A549 (cell line): ENCODE measurements at regions of chr15 and their contacts with region 1.

Region 1: GRCh38 chr15:81400640-81401236 is 26.7 kb upstream of the TMC3 start:
- DNase-seq: peak; percentile 55 to 61
- ATAC-seq: peak; percentile 67 to 78; a peak in 4 of 6 replicates
- H3K4me3 ChIP-seq: no peak overlapping the region
- H3K27ac ChIP-seq: no peak overlapping the region
- H3K4me1 ChIP-seq: no peaks in the 10 kb centered on the region
- CTCF ChIP-seq: peak; percentile 82
- EP300 ChIP-seq: no peak
- POLR2A ChIP-seq: no peak
- RAD21 ChIP-seq: peak; percentile 86 to 87

Region 2: DNA sequence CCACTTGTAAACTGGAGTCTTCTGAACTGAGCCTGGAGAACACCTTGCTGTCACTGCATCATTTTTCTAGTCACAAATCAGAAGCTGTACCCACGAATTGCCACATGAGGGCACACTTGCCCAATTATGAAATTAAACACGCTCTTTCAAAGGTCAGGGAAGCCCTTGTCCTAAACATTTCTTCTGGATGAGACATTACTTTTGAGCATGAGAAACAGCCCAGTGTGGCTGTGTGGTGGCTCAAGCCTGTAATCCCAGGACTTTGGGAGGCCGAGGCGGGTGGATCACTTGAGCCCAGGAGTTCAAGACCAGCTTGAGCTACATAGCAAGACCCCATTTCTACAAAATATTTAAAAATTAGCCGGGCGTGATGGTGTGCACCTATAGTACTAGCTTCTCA is 294.2 kb before region 1 on chr15:
- CTCF ChIA-PET with region 1: interaction called, 14 read pairs
- POLR2A ChIA-PET with region 1: no interaction called
- DNase-seq: peak; percentile 61 to 64
- ATAC-seq: peak; percentile 62 to 83
- H3K4me3 ChIP-seq: no peak overlapping the region
- H3K27ac ChIP-seq: no peak overlapping the region
- H3K4me1 ChIP-seq: no peaks in the 10 kb centered on the region
- CTCF ChIP-seq: peak; percentile 73
- EP300 ChIP-seq: no peak
- POLR2A ChIP-seq: no peak
- RAD21 ChIP-seq: peak; percentile 75 to 81

Region 3: DNA sequence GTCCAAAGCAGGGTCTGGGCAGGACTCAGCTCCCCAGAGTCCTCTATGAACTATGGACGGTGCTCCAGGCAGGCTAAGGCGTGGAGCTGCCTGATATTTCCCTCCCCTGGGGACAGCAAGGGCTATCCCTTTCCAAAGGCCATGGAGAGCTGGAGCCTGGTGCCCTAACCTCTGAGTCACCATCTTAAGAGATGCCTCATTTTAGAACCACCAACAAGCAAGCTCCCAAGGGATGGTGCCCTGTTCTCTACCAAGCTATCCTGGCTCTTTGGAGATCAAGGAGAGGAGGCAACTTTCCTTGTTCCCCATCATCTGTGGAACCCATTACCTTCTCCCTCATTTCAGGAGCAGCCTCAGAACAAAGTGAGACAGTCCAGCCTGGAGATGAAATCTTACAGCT is 92.5 kb before region 1 on chr15:
- CTCF ChIA-PET with region 1: interaction called, 13 read pairs
- POLR2A ChIA-PET with region 1: no interaction called
- DNase-seq: no peak
- ATAC-seq: no peak
- H3K4me3 ChIP-seq: no peak overlapping the region
- H3K27ac ChIP-seq: no peak overlapping the region
- H3K4me1 ChIP-seq: peaks cover 11% of the 10 kb centered on the region
- CTCF ChIP-seq: no peak
- EP300 ChIP-seq: no peak
- POLR2A ChIP-seq: no peak
- RAD21 ChIP-seq: no peak

Region 4: GRCh38 chr15:81343371-81343770 is 57.4 kb before region 1 on chr15:
- CTCF ChIA-PET with region 1: interaction called, 10 read pairs
- POLR2A ChIA-PET with region 1: no interaction called
- DNase-seq: no peak
- ATAC-seq: no peak
- H3K4me3 ChIP-seq: no peak overlapping the region
- H3K27ac ChIP-seq: no peak overlapping the region
- H3K4me1 ChIP-seq: peaks cover 9% of the 10 kb centered on the region; the same call in 2 of the 3 replicates
- CTCF ChIP-seq: no peak
- EP300 ChIP-seq: no peak
- POLR2A ChIP-seq: no peak
- RAD21 ChIP-seq: no peak

Region 5: DNA sequence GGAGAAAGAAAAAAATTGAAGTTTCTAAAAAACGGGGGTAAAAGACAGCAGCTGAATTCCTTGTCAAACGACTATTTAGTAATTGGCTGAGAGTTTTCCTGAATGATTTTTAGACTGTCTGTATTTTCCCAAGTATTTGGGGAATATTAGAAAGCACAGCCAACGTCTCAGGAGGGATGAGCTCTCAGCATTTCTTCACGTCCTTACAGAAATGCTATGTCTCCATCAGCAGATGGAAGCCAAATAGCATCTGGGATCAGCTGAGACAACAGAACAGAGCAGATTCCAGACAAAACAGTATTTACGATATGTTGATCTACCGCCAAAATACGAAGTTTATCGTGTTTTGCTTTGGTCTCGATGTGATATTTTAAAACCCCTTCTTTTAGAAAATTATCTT is 21.5 kb before region 1 on chr15:
- CTCF ChIA-PET with region 1: interaction called, 22 read pairs
- POLR2A ChIA-PET with region 1: no interaction called
- DNase-seq: no peak
- ATAC-seq: no peak
- H3K4me3 ChIP-seq: no peak overlapping the region
- H3K27ac ChIP-seq: no peak overlapping the region
- H3K4me1 ChIP-seq: no peaks in the 10 kb centered on the region
- CTCF ChIP-seq: no peak
- EP300 ChIP-seq: no peak
- POLR2A ChIP-seq: no peak
- RAD21 ChIP-seq: no peak

Region 6: DNA sequence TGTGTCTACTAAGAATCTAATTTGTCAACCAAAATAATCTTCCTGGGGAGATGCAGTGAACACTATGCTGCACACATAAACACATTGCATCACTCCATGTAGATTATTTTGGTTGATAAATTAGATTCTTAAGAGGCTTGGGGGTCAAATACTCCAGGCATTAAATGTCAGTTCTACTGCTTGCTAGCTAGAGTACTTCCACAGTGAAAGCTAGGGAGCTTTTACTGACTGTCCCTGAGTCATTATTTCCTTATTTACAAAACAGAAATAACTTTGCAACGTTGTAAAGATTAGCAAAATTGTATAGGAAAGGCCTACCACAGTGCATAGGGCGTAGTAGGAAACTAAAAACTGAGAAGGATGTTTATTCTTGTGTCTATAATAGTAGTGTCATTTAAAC is 13.8 kb before region 1 on chr15:
- CTCF ChIA-PET with region 1: interaction called, 28 read pairs
- POLR2A ChIA-PET with region 1: no interaction called
- DNase-seq: no peak
- ATAC-seq: no peak
- H3K4me3 ChIP-seq: no peak overlapping the region
- H3K27ac ChIP-seq: no peak overlapping the region
- H3K4me1 ChIP-seq: no peaks in the 10 kb centered on the region
- CTCF ChIP-seq: no peak
- EP300 ChIP-seq: no peak
- POLR2A ChIP-seq: no peak
- RAD21 ChIP-seq: no peak

Region 7: DNA sequence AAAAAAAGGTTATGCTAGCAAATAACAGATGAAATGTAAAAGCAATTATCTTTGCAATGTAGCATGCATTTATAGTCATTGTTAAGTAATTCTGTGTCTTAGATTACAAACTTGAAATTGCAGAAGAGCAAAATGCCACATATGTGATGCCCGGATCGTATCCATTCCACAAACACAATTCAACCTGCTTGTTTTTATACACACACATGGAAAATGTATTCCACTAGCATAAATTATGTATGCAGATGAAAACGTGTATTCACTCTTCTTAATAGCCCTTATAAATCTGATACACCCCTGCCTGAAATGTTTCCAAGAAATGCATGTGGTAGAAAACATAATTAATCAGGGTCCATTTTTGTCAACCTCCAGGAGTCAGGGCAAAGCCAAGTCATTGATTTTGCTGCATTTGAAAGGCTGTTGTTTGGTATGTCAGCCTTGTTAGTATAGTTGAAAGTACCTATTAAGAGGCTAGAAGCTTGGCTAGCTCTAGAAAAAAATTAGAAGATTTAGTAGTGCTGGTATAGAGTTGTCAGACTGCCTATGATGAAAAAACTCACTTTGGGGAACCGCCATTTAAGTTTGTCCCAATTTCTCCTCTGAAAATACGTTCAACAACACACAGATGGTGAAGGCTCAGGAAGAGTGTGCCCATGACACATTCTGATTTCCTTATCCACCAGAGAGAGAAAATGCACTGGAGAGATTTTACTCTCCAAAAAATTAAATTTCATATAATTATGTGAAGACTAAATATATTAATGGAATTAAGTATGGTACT is 42.5 kb after region 1 on chr15:
- CTCF ChIA-PET with region 1: no interaction called
- POLR2A ChIA-PET with region 1: no interaction called
- DNase-seq: no peak
- ATAC-seq: no peak
- H3K4me3 ChIP-seq: no peak overlapping the region
- H3K27ac ChIP-seq: no peak overlapping the region
- H3K4me1 ChIP-seq: no peaks in the 10 kb centered on the region
- CTCF ChIP-seq: no peak
- EP300 ChIP-seq: no peak
- POLR2A ChIP-seq: no peak
- RAD21 ChIP-seq: no peak